Left cardiac atrium (tissue), 4 donors: ENCODE measurements at regions of chr10 and their contacts with region 1.

Region 1: GRCh38 chr10:79068562-79069324 is at the start of gene ZMIZ1:
- DNase-seq: peak; percentile 92
- ATAC-seq: peak; percentile 36 to 40
- total RNA-seq, gene ZMIZ1: 51.4 to 58.0 TPM

Region 2: GRCh38 chr10:78688901-78689583 is 379.7 kb before region 1 on chr10:
- intact Hi-C with region 1: no loop called
- DNase-seq: no peak
- ATAC-seq: peak; percentile 38 to 76

Region 3: GRCh38 chr10:78972947-78973900 is 95.5 kb before region 1 on chr10:
- intact Hi-C with region 1: loop called in 1 of 2 experiments (anchors 5 kb)
- DNase-seq: peak; percentile 88
- ATAC-seq: peak; percentile 70 to 79

Region 4: GRCh38 chr10:79022565-79023230 is 46.0 kb before region 1 on chr10:
- intact Hi-C with region 1: loop called in 1 of 2 experiments (anchors 5 kb)
- DNase-seq: peak; percentile 74
- ATAC-seq: peak; percentile 57 to 71

Region 5: DNA sequence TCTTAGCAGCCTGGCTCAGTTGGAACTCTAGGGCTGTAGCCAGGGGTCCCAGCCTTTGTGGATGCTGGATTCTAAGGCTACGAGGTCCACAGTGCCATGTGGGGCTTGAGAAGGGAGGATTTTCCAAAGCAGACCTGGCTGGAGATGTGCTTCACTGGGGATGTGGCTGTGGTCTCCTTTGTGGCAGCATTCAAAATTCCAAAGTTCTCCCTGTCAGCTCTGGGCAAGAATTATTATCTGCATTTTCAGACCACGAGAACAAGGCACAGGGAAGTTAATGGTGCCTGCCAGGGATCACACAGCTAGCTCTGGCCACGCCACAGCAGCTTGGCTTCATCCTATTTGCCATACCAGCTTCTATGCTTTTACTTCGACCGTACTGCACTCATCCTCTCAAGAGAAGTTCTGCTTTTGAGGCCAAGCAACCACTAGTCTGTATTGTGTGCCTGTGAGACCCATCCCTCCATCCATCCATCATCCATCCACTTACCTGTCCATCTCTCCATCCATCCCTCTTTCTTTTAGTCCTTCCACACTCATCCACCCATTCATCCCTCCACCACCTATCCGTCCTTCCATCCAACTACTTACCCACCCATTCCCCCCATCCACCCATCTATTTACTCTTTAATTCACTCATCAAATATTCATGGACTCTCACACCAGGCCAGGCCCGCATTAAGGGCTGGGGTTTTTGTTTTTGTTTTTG is 71.5 kb after region 1 on chr10:
- intact Hi-C with region 1: loop called (anchors 2 to 10 kb)
- DNase-seq: no peak
- ATAC-seq: no peak

Region 6: DNA sequence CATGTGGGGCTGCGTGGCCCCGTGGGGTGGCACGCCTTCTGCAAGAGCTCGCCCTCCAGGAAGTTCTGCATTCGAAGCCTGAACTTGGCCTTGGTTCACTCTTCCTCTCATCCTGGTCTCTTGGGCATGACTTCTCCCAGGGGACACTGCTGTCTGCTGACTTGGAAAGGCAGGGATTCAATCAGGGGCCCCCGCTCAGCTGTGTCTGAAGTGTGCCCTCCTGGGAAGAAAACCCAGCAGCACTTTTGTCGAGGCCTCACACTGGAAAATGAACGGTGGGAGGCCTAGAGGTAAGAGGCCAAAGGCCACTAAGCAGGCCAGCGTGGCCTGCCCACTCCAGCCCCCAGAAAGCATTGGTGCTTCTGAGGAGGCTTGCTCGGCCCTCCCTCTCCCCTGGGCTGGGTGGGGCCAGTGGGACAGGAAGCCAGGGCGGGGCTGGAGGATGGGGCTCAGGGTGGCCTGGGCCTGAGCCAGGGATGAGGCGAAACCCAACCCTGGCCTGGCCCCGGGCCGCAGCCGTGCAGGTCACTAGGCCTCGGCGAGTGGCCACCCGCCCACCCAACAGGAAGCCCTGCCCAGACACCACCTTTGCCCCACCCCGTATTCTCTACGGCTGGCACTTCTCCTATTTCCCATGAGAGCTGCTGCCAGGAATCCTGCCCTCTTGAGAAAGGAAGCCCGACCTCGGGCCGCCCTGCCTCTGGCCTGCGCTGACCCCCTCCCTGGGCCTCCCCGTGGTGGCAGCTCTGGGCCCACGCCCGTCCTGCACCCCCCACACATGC is 81.1 kb after region 1 on chr10:
- intact Hi-C with region 1: loop called in 1 of 2 experiments (anchors 10 kb)
- DNase-seq: peak; percentile 92
- ATAC-seq: peak; percentile 47 to 71

Region 7: DNA sequence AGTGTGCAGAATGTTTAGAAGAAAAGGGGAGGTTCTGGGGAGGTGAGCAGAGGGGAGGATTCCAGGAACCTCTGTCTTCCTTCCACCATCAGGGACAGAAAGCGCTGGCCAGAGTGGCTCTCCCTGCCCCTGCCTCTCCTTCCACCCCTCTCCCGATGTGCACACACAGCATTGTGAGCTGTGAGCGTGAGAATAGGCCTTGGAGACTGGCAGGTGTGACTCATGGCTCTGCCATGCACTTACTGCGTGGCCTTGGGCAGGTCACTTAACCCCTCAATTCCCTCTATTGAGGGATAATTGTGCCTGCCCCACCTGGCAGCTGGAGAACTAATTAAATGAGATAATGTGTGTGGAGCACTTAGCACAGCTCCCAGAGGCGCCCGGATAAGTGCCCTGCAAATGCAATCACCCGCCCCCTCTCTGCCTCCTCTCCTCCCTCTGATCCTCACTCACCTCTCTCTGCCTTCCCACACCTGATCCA is 115.4 kb after region 1 on chr10:
- intact Hi-C with region 1: loop called (anchors 5 kb)
- DNase-seq: no peak
- ATAC-seq: peak in 1 of 2 donors; percentile 59